Activated CD4-positive, alpha-beta T cell treated with anti-CD3 and anti-CD28 coated beads for 36 hours (primary cell): ENCODE measurements at regions of chr17 and their contacts with region 1.

Region 1: DNA sequence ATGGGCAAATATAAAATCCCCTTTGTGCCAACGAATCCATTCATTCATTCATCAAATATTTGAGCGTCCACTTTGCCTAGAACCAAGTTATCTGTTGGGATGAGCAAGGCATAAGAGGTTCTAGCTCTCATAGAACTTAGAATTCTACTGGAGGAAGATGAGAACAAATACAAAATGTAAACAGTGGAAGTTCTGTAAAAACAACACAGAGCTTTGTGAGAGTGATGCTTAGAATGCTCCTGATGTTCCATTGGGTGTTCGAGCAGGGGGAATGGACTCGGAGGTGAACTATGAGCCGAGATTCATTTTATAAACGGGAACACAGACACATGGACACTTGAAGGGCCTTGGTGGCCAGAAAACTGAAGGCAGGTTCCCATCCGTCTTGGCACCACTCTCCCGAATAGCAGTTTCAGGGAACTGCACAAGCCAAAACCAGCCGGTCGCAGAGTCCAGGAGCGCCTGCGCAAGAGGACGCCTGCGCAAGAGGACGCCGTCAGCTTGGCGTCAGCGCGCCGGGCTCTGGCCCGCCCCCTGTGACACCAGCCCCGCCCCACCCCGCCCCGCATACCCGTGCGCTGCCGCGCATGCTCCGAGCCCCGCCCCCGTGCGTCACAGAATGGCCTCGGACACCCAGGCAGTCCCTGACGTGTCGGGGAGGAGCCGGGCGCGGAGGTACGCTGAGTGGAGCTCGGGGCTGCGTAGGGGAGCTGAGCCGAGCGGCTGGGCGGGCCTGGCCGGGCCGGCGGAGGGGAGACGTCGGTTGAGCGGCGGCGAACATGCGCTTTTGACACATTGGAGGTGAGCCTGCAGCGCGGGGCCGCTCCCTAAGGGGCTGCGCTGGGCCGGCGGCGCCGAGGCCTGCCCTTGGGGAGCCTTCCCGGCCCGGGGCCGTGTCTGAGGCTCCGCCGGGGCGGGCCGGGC is at the start of gene NDEL1:
- DNase-seq: peak; percentile 100
- ATAC-seq: peak; percentile 98
- H3K4me3 Mint-ChIP-seq: peak within 1 kb of the TSS; percentile 87
- H3K27ac Mint-ChIP-seq: peak within 1 kb of the TSS; percentile 91
- H3K4me1 Mint-ChIP-seq: peaks cover 29% of the 10 kb centered on the region
- H3K27me3 Mint-ChIP-seq: no peaks in the 10 kb centered on the region
- total RNA-seq, gene NDEL1: 51.9 to 58.6 TPM

Region 2: DNA sequence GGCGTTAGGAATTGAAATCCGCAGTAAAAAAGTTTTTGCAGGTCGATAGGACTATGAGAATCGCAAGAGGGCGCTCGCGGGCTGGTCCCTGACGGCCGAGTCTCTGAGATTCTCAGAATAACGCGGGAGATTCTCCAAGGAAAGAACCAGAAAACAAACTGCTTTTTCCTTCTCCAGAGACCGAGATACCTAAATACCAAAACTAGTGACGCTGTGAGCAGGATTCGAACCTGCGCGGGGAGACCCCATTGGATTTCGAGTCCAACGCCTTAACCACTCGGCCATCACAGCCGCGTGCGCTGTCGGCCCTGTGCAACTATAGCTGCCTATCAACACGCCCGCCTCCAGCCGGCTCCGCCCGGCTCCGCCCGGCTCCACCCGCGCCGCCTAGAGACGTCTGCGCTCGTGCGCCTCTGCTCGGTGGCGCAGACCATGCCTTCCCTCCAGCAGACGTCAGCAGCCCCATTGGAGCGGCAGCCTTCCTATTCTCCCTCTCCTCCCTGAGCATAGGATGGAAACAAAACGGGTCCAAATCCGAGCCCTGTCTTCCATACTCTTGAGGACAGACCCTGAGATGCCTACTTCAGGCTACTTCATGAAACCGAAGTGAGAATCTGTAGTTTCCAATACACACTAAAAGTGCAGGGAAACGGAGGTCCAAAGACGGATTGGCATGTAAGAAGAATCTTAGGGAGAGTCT is 296.7 kb before region 1 on chr17:
- CTCF ChIA-PET with region 1: no interaction called
- POLR2A ChIA-PET with region 1: no interaction called
- intact Hi-C with region 1: loop called in 1 of 2 experiments (anchors 5 kb)
- DNase-seq: peak; percentile 98
- ATAC-seq: peak; percentile 90
- H3K4me3 Mint-ChIP-seq: no peak overlapping the region
- H3K27ac Mint-ChIP-seq: no peak overlapping the region
- H3K4me1 Mint-ChIP-seq: no peaks in the 10 kb centered on the region
- H3K27me3 Mint-ChIP-seq: no peaks in the 10 kb centered on the region

Region 3: DNA sequence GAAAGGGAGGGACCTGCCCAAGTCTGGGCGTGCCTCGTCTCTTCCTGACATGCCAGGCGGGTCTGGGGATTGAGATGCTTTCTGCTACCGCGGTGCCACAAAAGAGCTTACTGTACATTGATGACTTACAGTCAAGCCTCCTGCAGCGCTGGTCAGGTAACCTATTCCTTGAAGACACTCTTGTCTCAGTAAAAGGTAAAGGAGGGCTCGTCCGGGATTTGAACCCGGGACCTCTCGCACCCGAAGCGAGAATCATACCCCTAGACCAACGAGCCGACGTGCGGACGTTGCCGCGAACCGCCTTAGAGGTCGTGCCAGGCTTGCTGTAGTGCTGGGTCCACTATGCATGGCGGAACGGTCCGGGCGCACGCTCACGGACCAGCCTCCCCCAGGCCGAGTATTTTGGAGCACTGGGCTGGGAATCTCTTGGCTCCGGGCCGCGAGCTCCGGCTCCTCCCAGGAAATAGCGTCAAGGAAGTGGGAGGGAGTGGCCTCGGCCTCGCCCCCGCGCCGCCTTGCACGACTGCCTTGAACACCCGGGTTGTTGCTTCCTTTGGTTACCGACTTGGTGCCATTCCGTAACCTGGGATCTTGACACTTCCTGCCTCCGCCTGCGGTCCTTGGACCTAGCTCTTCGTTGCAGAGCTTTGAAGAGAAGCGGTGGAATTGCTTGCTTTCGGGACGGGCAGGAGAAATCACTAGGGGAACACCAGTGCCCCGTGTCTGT is 212.7 kb before region 1 on chr17:
- CTCF ChIA-PET with region 1: no interaction called
- POLR2A ChIA-PET with region 1: no interaction called
- intact Hi-C with region 1: no loop called
- DNase-seq: peak; percentile 94
- ATAC-seq: peak; percentile 35
- H3K4me3 Mint-ChIP-seq: peak overlapping the region; percentile 98
- H3K27ac Mint-ChIP-seq: peak overlapping the region; percentile 98
- H3K4me1 Mint-ChIP-seq: peaks cover 54% of the 10 kb centered on the region
- H3K27me3 Mint-ChIP-seq: no peaks in the 10 kb centered on the region

Region 4: DNA sequence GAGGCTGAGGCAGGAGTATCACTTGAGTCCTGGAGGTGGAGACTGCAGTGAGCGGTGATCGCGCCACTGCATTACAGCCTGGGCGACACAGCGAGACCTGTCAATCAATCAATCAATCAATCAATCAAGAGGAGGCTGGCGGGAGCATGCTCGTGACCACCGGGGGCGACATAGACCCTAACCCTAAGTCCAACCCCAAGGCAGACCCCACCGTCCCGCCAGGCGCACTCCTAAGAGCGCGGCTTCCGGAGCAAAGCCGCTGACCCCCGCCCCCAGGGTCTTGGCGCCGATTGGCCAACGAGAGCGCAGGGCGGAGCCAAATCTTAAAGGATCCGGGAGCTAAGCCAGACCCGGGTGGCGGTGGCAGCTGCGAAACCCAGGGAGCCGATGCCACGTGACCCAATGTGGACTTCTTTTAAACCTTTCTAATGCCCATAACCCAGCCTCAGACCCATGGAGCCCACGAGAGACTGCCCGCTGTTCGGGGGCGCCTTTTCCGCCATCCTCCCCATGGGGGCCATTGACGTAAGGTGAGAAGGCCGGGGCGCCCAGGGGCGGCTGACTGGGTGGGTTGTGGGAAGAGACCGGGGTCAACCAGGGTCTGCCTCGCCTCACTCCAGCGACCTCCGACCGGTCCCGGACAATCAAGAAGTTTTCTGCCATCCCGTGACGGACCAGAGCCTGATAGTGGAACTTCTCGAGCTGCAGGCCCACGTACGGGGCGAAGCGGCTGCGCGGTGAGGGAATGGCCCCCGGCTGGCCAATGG is 147.0 kb before region 1 on chr17 and contains the start of gene RANGRF:
- CTCF ChIA-PET with region 1: no interaction called
- POLR2A ChIA-PET with region 1: no interaction called
- intact Hi-C with region 1: loop called in 1 of 2 experiments (anchors 2 kb)
- DNase-seq: peak; percentile 91
- ATAC-seq: peak; percentile 94
- H3K4me3 Mint-ChIP-seq: peak within 1 kb of the TSS; percentile 84
- H3K27ac Mint-ChIP-seq: peak within 1 kb of the TSS; percentile 93
- H3K4me1 Mint-ChIP-seq: peaks cover 20% of the 10 kb centered on the region
- H3K27me3 Mint-ChIP-seq: no peaks in the 10 kb centered on the region
- total RNA-seq, gene RANGRF: 37.9 to 40.1 TPM

Region 5: GRCh38 chr17:8294814-8295316 is 140.6 kb before region 1 on chr17:
- CTCF ChIA-PET with region 1: no interaction called
- POLR2A ChIA-PET with region 1: interaction called, 4 read pairs
- intact Hi-C with region 1: loop called in 1 of 2 experiments (anchors 2 kb)
- DNase-seq: no peak
- ATAC-seq: no peak
- H3K4me3 Mint-ChIP-seq: peak overlapping the region; percentile 76
- H3K27ac Mint-ChIP-seq: peak overlapping the region; percentile 90
- H3K4me1 Mint-ChIP-seq: peaks cover 17% of the 10 kb centered on the region
- H3K27me3 Mint-ChIP-seq: no peaks in the 10 kb centered on the region

Region 6: DNA sequence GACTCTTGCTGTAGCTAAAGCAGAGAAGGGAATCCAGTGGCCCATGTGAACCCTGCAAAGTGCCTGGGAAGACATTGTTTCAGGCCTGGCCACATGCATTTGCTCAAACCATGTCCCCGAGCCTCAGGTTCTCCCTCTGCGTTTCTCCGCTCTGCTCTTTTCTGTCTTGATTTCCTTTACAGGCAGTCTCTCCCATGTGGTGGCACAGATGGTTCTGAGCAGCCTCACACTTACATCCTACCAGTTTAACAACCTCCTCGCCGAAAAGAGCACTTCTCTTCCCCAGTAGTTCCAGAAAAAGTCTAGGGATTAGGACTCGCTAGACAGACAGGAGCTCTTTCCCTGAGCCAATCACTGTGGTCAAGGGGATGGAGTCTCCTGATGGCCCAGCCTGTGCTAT is 223.3 kb after region 1 on chr17:
- CTCF ChIA-PET with region 1: no interaction called
- POLR2A ChIA-PET with region 1: no interaction called
- intact Hi-C with region 1: no loop called
- DNase-seq: no peak
- ATAC-seq: no peak
- H3K4me3 Mint-ChIP-seq: no peak overlapping the region
- H3K27ac Mint-ChIP-seq: peak overlapping the region; percentile 25
- H3K4me1 Mint-ChIP-seq: no peaks in the 10 kb centered on the region
- H3K27me3 Mint-ChIP-seq: peaks cover 11% of the 10 kb centered on the region

Region 7: GRCh38 chr17:8745586-8746500 is 310.3 kb after region 1 on chr17:
- CTCF ChIA-PET with region 1: interaction called, 6 read pairs
- POLR2A ChIA-PET with region 1: no interaction called
- intact Hi-C with region 1: loop called in 1 of 2 experiments (anchors 1 kb)
- DNase-seq: peak; percentile 87
- ATAC-seq: peak; percentile 83
- H3K4me3 Mint-ChIP-seq: peak overlapping the region; percentile 77
- H3K27ac Mint-ChIP-seq: peak overlapping the region; percentile 79
- H3K4me1 Mint-ChIP-seq: peaks cover 3% of the 10 kb centered on the region
- H3K27me3 Mint-ChIP-seq: no peaks in the 10 kb centered on the region